ENCODE measurements at regions of chr2 and their contacts with region 1.

Region 1: DNA sequence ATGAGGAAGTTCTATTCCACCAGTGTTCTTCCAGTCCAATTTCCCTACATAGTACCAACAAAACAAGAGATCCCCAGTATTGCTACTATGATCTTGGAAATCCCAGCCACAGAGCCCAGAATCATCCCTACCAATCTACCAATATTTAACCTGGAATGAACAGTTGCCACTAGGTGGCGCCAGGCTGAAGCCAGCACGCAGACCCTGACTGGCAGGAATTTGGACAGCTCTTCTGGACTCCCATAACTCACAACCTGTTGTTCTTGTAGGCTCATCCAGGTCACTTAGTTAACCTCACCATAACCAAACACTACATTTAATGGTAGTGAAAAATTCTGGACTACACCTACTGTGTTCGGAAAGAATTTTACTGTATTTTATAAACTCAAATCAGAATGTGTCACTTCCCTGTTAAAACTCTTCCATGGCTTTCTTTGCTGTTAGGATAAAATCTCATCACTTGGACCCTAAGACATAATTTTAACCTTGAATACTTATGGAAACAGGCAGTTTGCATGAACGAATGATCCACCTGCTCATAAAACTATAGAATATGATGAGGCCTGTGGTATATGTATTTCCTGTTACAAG is 59.8 kb upstream of the SLC38A11 start:
- DNase-seq: peak; percentile 70
- H3K4me3 ChIP-seq: peak overlapping the region in 1 of 2 experiments; percentile 23; a peak in 1 of 4 replicates
- H3K27ac ChIP-seq: no peak overlapping the region
- H3K4me1 ChIP-seq: peaks cover 0 to 5% of the 10 kb centered on the region in 2 experiments; a peak in 2 of 4 replicates
- H3K27me3 ChIP-seq: no peaks in the 10 kb centered on the region
- CTCF ChIP-seq: peak; percentile 97
- EP300 ChIP-seq: no peak
- RAD21 ChIP-seq: peak; percentile 84

Region 2: GRCh38 chr2:164967781-164968228 is 47.3 kb before region 1 on chr2:
- CTCF ChIA-PET with region 1: no interaction called
- POLR2A ChIA-PET with region 1: no interaction called
- DNase-seq: no peak
- H3K4me3 ChIP-seq: no peak overlapping the region
- H3K27ac ChIP-seq: no peak overlapping the region
- H3K4me1 ChIP-seq: peaks cover 2 to 7% of the 10 kb centered on the region in 2 experiments; a peak in 1 of 4 replicates
- H3K27me3 ChIP-seq: no peaks in the 10 kb centered on the region
- CTCF ChIP-seq: no peak
- EP300 ChIP-seq: no peak
- RAD21 ChIP-seq: no peak

Region 3: DNA sequence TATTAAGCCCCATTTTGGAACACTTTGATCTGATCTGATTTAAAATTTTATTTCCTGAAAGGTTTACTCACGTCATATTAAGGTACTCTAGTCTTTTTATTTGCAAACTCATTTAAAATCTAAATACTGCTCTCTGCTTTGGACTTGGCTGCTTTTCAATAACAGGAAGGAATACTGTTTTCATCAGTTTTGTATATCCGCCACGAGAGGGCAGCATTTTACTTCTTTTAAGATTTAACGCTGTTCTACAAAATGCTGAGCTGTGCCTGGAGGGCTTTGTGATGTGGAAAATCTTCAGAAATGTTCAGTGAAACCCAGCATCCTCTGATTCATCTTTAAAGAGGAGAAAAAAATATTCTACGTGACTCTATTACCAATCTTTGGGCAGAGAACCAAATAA is 22.3 kb before region 1 on chr2:
- CTCF ChIA-PET with region 1: interaction called, 62 read pairs
- POLR2A ChIA-PET with region 1: no interaction called
- DNase-seq: peak; percentile 45
- H3K4me3 ChIP-seq: no peak overlapping the region
- H3K27ac ChIP-seq: peak overlapping the region in 1 of 2 experiments; percentile 5; a peak in 1 of 4 replicates
- H3K4me1 ChIP-seq: peaks cover 0 to 18% of the 10 kb centered on the region in 2 experiments; a peak in 2 of 4 replicates
- H3K27me3 ChIP-seq: no peaks in the 10 kb centered on the region
- CTCF ChIP-seq: peak; percentile 51
- EP300 ChIP-seq: no peak
- RAD21 ChIP-seq: peak; percentile 81

Region 4: GRCh38 chr2:165067958-165068757 is 53.0 kb after region 1 on chr2:
- CTCF ChIA-PET with region 1: interaction called, 39 read pairs
- POLR2A ChIA-PET with region 1: interaction called, 4 read pairs
- DNase-seq: peak; percentile 79
- H3K4me3 ChIP-seq: peak overlapping the region; percentile 28 to 44
- H3K27ac ChIP-seq: peak overlapping the region; percentile 26 to 92; a peak in 3 of 4 replicates
- H3K4me1 ChIP-seq: peaks cover 0 to 25% of the 10 kb centered on the region in 2 experiments; a peak in 2 of 4 replicates
- H3K27me3 ChIP-seq: no peaks in the 10 kb centered on the region
- CTCF ChIP-seq: no peak
- EP300 ChIP-seq: no peak
- RAD21 ChIP-seq: 0 out of 2 replicates have a peak, but pooled peaks have one; percentile 11

Region 5: GRCh38 chr2:165141601-165142354 is 126.6 kb after region 1 on chr2:
- CTCF ChIA-PET with region 1: interaction called, 15 read pairs
- POLR2A ChIA-PET with region 1: no interaction called
- DNase-seq: no peak
- H3K4me3 ChIP-seq: no peak overlapping the region
- H3K27ac ChIP-seq: no peak overlapping the region; a peak in 1 of 4 replicates
- H3K4me1 ChIP-seq: no peaks in the 10 kb centered on the region
- H3K27me3 ChIP-seq: no peaks in the 10 kb centered on the region
- CTCF ChIP-seq: peak; percentile 53
- EP300 ChIP-seq: no peak
- RAD21 ChIP-seq: peak; percentile 49

Region 6: DNA sequence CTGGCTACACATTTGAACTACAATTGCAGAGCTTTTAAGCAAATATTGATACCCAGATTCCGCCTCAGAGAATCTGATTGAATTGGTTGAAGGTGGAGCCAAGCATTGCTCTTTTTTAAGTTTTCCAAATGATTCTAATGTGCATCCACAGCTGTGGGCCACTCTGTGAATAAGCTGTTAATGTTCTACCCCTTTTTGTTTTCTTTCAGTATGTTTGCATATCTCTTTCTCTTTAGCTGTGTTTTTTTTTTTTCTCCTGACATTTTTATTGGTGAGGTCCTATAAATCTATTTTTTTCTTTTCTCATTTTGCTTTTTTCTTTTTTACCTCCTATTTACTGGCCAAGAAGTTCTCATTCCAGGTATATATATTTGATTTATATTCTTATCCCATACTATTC is 182.2 kb after region 1 on chr2:
- CTCF ChIA-PET with region 1: interaction called, 300 read pairs
- POLR2A ChIA-PET with region 1: no interaction called
- DNase-seq: no peak
- H3K4me3 ChIP-seq: no peak overlapping the region
- H3K27ac ChIP-seq: no peak overlapping the region
- H3K4me1 ChIP-seq: no peaks in the 10 kb centered on the region; a peak in 2 of 4 replicates
- H3K27me3 ChIP-seq: no peaks in the 10 kb centered on the region
- CTCF ChIP-seq: no peak
- EP300 ChIP-seq: no peak
- RAD21 ChIP-seq: no peak

Region 7: GRCh38 chr2:165227571-165227970 is 212.4 kb after region 1 on chr2:
- CTCF ChIA-PET with region 1: interaction called, 13 read pairs
- POLR2A ChIA-PET with region 1: no interaction called
- DNase-seq: no peak
- H3K4me3 ChIP-seq: no peak overlapping the region
- H3K27ac ChIP-seq: no peak overlapping the region
- H3K4me1 ChIP-seq: no peaks in the 10 kb centered on the region
- H3K27me3 ChIP-seq: no peaks in the 10 kb centered on the region
- CTCF ChIP-seq: no peak
- EP300 ChIP-seq: no peak
- RAD21 ChIP-seq: no peak